Ovary (tissue), 10 donors: ENCODE measurements at regions of chr11 and their contacts with region 1.

Region 1: GRCh38 chr11:33996498-33997454 is 54.8 kb upstream of the CAPRIN1 start:
- DNase-seq: peak; percentile 36 to 71 (median 58)
- H3K4me3 ChIP-seq: no peak overlapping the region
- H3K27ac ChIP-seq: no peak overlapping the region
- H3K4me1 ChIP-seq: no peaks in the 10 kb centered on the region
- H3K27me3 ChIP-seq: no peaks in the 10 kb centered on the region
- CTCF ChIP-seq: peak; percentile 40 to 62 (median 61)
- EP300 ChIP-seq: no peak
- POLR2A ChIP-seq: no peak

Region 2: GRCh38 chr11:33936725-33937604 is 59.8 kb before region 1 on chr11:
- intact Hi-C with region 1: no loop called
- DNase-seq: peak in 3 of 5 donors; percentile 26 to 59 (median 39)
- H3K4me3 ChIP-seq: no peak overlapping the region
- H3K27ac ChIP-seq: no peak overlapping the region
- H3K4me1 ChIP-seq: no peaks in the 10 kb centered on the region
- H3K27me3 ChIP-seq: no peaks in the 10 kb centered on the region
- CTCF ChIP-seq: no peak
- EP300 ChIP-seq: no peak
- POLR2A ChIP-seq: no peak

Region 3: GRCh38 chr11:34174412-34175041 is 177.8 kb after region 1 on chr11:
- intact Hi-C with region 1: loop called in 1 of 4 experiments (anchors 5 kb)
- DNase-seq: peak; percentile 81 to 92 (median 88)
- H3K4me3 ChIP-seq: peak overlapping the region; percentile 6
- H3K27ac ChIP-seq: no peak overlapping the region
- H3K4me1 ChIP-seq: no peaks in the 10 kb centered on the region
- H3K27me3 ChIP-seq: no peaks in the 10 kb centered on the region
- CTCF ChIP-seq: peak; percentile 92 to 96 (median 95)
- EP300 ChIP-seq: no peak
- POLR2A ChIP-seq: no peak

Region 4: DNA sequence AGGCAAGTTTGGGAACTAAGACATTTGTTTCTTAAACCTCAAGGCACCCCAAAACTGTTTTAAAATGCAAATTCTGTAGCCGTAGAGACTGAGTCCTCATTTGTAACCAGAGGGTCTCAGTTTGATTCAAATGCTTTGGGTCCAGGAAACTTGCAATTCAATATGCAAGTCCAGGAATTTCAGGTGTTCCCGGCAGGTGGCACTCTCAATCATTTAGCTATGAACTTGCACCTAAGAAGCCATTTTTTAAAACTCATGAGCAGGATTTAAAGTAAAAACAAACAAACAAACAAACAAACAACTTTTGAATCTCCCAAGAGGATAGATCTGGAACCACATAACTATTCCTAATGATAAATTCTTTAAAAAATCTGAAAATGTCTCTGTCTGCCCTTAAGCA is 369.7 kb after region 1 on chr11:
- intact Hi-C with region 1: loop called (anchors 5 to 10 kb)
- DNase-seq: no peak
- H3K4me3 ChIP-seq: no peak overlapping the region
- H3K27ac ChIP-seq: no peak overlapping the region
- H3K4me1 ChIP-seq: no peaks in the 10 kb centered on the region
- H3K27me3 ChIP-seq: no peaks in the 10 kb centered on the region
- CTCF ChIP-seq: no peak
- EP300 ChIP-seq: no peak
- POLR2A ChIP-seq: no peak